ENCODE measurements at regions of chr19 and their contacts with region 1.

Region 1: DNA sequence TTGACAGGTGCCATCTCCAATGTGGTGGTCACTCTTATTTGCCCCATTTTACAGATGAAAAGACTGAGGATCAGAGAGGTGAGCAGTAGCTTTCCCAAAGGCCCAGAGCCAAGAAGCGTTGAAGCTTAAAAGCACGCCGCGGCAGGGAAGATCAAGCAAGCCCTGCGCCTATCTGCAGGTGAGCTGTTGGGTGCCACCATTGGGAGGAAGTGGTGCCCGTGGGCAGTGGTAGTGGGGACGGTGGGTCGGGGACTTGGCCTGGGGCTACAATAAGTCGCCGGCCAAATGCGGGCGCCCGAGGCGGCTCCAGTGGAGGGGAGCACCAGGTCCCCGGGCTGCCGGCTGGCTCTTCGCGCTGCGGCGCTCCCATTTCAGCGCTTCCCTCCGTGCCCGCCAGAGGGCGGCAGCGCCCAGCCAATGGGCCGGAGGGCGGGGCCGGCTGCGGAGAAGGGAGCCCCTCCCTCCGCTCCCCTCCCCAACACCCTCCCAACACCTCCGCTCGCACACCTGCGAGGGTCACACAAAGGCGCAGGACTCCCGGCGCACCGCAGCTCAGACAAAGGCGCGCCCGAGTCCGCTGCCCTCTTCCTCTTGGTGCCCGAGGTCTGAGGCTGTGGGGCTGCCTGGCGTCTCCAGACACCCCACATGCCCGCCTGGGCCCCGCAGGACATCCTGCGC is 744 bp upstream of the POU2F2 start:
- DNase-seq: peak; percentile 68 to 70 (median 68)
- H3K4me3 ChIP-seq: peak overlapping the region; percentile 86 to 98 (median 97)
- H3K4me3 Mint-ChIP-seq: peak overlapping the region; percentile 98 to 99
- H3K27ac ChIP-seq: peak overlapping the region; percentile 85 to 89
- H3K27ac Mint-ChIP-seq: peak overlapping the region; percentile 80 to 97 (median 95)
- H3K4me1 ChIP-seq: peaks cover 45 to 65% of the 10 kb centered on the region in 2 donors
- H3K4me1 Mint-ChIP-seq: peaks cover 54% of the 10 kb centered on the region
- H3K27me3 ChIP-seq: no peaks in the 10 kb centered on the region
- H3K27me3 Mint-ChIP-seq: peaks cover 0 to 3% (median 3%) of the 10 kb centered on the region in 3 donors
- CTCF ChIP-seq: peak; percentile 99

Region 2: GRCh38 chr19:42199440-42200115 is 66.6 kb after region 1 on chr19:
- intact Hi-C with region 1: loop called in 1 of 2 experiments (anchors 5 kb)
- DNase-seq: peak; percentile 82 to 87 (median 86)
- H3K4me3 ChIP-seq: peak overlapping the region; percentile 28 to 79 (median 54)
- H3K4me3 Mint-ChIP-seq: peak overlapping the region; percentile 79 to 86
- H3K27ac ChIP-seq: peak overlapping the region; percentile 100
- H3K27ac Mint-ChIP-seq: peak overlapping the region; percentile 100
- H3K4me1 ChIP-seq: peaks cover 90% of the 10 kb centered on the region in 2 donors
- H3K4me1 Mint-ChIP-seq: peaks cover 87% of the 10 kb centered on the region
- H3K27me3 ChIP-seq: no peaks in the 10 kb centered on the region
- H3K27me3 Mint-ChIP-seq: peaks cover 0 to 5% (median 0%) of the 10 kb centered on the region in 3 donors
- CTCF ChIP-seq: peak; percentile 74

Region 3: DNA sequence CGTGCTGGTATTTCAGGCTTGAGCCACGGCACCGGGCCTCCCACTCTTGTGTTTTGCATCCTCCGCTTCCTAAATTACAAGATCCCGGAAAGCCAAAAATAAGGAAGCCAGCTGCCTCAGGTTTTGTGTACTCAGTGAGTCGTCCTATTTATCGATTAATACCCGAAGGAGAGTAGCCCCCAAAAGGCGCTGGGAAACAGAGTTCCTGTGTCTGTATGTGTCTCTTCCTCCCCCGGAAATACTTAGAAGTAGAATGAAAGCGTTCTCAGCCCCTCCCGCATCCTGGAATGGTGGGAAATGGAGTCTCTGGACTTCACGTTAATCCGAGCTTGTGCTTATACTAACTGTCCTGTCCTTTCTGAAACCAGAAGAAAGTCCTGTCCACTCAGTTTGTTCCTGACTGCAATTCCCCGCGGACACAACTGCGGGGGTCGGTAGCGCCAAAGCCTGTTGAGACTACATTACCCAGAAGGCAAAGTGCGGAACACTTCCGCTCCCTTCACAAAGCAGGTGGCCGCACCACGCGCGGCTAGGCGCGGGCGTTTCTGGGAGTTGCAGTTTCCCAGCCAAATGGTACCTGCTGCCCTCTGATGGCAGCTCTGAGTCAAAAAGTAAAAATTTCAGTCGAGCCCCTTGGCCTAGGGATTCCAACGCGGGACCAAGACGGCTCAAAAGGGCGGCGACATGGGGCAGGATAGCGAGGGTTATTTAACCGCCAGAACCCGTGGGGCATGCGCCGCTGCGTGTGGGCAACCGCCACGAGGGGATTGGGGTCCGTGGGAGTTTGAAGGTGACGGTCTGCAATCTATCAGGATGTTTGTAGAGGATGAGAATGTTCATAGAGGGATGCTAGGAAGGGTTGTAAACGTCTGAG is 111.6 kb after region 1 on chr19:
- intact Hi-C with region 1: loop called in 1 of 2 experiments (anchors 10 kb)
- DNase-seq: peak; percentile 90 to 94 (median 90)
- H3K4me3 ChIP-seq: peak overlapping the region; percentile 79 to 96 (median 84)
- H3K4me3 Mint-ChIP-seq: peak overlapping the region; percentile 95 to 99
- H3K27ac ChIP-seq: peak overlapping the region; percentile 61 to 76
- H3K27ac Mint-ChIP-seq: peak overlapping the region; percentile 96 to 98 (median 97)
- H3K4me1 ChIP-seq: peaks cover 37 to 44% of the 10 kb centered on the region in 2 donors
- H3K4me1 Mint-ChIP-seq: peaks cover 48% of the 10 kb centered on the region
- H3K27me3 ChIP-seq: no peaks in the 10 kb centered on the region
- H3K27me3 Mint-ChIP-seq: peaks cover 0 to 4% (median 3%) of the 10 kb centered on the region in 3 donors
- CTCF ChIP-seq: peak; percentile 68

Region 4: DNA sequence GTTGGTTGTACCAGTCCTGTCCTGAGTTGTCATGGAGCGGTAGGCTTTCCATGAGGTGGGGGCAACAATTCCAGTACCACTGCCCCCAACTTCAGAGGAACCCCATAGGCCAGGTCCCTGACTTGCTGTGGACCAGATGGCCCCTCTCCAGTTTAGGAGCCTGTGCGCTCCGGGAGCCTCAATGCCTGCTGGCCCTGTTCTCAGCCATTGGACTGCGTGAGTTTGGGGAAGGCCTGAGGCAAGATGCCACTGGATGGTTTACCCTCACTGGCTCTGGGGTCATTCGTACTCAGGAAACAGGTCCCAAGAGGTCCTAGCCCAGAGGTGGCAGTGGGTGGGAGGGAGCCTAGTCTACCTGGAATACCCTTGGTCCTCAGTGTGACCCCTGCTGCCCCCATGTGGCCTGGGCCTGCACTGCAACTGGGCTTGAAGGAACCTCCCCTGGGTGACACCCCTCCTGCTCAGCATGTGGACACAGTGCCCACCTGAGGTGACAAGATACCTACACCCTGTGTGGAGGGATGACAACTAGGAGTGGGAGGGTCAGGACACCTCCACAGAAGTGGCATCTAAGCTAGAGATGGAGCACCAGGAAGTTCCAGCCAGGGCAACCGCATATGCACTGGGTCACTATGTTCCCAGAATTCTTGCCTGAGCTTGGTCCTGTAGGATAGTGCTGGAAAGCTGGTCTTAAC is 163.0 kb after region 1 on chr19:
- intact Hi-C with region 1: loop called in 1 of 2 experiments (anchors 5 kb)
- DNase-seq: peak; percentile 55 to 65 (median 64)
- H3K4me3 ChIP-seq: no peak overlapping the region
- H3K4me3 Mint-ChIP-seq: no peak overlapping the region
- H3K27ac ChIP-seq: no peak overlapping the region
- H3K27ac Mint-ChIP-seq: peak overlapping the region in 4 of 7 donors; percentile 6 to 77 (median 36)
- H3K4me1 ChIP-seq: no peaks in the 10 kb centered on the region
- H3K4me1 Mint-ChIP-seq: peaks cover 2% of the 10 kb centered on the region
- H3K27me3 ChIP-seq: no peaks in the 10 kb centered on the region
- H3K27me3 Mint-ChIP-seq: peaks cover 0 to 2% (median 0%) of the 10 kb centered on the region in 3 donors
- CTCF ChIP-seq: peak; percentile 98

Region 5: GRCh38 chr19:42325273-42325895 is 192.4 kb after region 1 on chr19 and contains the start of gene MEGF8:
- intact Hi-C with region 1: loop called in 1 of 2 experiments (anchors 10 kb)
- DNase-seq: peak; percentile 96 to 98 (median 98)
- H3K4me3 ChIP-seq: peak within 1 kb of the TSS; percentile 55 to 96 (median 85)
- H3K4me3 Mint-ChIP-seq: peak within 1 kb of the TSS; percentile 84 to 93
- H3K27ac ChIP-seq: peak within 1 kb of the TSS; percentile 5 to 65
- H3K27ac Mint-ChIP-seq: peak within 1 kb of the TSS; percentile 21 to 74 (median 50)
- H3K4me1 ChIP-seq: peaks cover 14 to 27% of the 10 kb centered on the region in 2 donors
- H3K4me1 Mint-ChIP-seq: peaks cover 31% of the 10 kb centered on the region
- H3K27me3 ChIP-seq: peaks cover 24 to 32% of the 10 kb centered on the region in 2 donors
- H3K27me3 Mint-ChIP-seq: peaks cover 38 to 49% (median 44%) of the 10 kb centered on the region in 3 donors
- CTCF ChIP-seq: peak; percentile 80
- polyA plus RNA-seq, gene MEGF8: 0.15 to 2.7 (median 0.27) TPM

Measured in CD14-positive monocyte (primary cell).